ENCODE measurements at regions of chr17 and their contacts with region 1.

Region 1: DNA sequence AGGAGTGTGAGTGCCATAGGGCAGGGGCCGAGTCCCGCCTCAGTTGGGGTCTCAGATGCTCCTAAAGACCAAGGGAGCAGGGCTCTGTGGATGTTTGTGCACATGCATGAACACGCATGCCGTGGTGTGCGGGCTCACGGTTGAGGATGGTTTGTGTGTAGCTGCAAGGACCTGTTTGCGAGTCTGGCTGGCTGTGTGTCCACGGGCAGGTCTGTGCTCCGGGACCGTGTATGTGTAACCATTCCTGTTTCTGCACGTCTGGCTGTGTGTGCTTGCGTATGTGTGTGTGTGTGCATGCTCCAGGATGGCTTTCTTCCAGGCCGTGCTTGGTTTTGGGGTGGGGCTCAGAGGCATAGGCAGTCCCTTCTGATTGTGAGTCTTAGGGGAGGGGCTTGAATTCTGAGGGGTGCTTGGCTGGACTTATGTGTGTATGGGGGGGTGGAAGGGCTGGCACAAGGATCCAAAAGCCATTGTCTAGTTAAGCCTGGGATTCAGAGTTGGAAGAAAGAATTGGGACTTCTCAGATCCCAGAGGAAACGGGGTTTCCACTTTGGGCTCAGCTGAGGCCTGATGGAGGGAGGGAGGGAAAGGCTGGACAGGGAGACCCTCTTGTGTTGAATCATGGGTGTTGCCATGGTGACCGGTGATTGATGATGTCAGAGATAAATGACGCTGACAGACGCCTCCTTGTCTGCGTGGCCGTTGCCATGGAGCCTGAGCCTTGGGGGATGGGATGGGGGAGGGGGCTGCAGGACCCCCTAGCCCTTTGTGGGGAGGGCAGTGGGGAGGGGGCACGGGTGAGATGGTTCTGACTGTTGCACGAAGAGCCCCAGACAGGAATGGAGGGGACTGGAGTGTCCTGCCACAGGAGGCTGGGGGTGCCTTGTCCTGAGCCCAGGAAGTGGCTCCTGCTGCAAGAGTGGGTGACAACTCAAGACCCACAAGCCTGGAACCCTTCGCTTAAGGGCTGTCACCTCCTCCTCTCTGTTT is 14.3 kb downstream of the GJD3 start:
- DNase-seq: peak in 4 of 5 donors; percentile 89 to 93 (median 92)
- H3K4me3 ChIP-seq: peak overlapping the region in 1 of 3 donors; percentile 24
- H3K27ac ChIP-seq: peak overlapping the region in 1 of 2 donors; percentile 1
- H3K4me1 ChIP-seq: peaks cover 4 to 77% (median 59%) of the 10 kb centered on the region in 3 donors
- H3K27me3 ChIP-seq: no peaks in the 10 kb centered on the region
- CTCF ChIP-seq: no peak

Region 2: DNA sequence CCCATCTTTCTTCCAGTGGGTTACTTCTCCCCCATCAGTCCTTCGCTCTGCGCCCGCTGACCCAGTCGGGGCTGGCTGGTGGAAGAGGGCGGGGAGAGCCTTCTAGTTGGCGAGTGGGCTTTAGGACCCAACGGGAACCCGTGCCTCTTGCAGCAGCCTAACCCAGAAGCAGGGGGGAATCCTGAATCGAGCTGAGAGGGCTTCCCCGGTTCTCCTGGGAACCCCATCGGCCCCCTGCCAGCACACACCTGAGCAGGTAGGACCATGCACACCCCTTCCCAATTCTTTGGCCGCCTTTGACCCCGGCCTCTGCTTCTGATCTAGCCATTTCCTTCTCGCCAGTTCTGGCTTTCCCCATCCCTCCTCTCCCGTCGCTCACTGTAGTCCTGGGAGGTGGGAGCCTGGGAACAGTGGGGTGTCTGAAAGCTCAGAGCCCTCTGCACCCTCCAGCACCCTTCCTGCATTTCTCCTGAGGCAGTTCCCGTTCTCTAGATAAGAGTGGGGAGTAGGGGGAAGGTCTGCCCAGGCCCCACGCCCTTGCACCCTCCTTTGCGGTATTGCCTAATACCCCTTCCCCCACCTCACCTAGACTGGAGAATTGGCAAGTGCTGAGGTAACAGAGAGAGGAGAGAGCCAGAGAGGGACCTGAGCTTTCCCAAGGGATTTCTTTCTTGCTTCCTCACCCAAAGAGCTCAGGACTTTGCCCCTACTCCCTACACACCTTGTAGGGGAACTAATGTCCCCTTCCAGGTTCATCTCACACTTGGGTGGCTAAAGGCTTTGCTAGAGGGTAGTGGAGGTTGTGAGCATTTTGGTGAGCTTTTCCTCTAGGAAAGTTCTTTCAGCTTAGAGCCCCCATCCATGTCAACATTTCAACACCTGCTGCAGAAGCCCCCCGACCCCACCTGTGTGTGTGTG is 40.9 kb before region 1 on chr17 and contains the start of gene RARA:
- intact Hi-C with region 1: loop called (anchors 5 kb)
- DNase-seq: peak in 4 of 5 donors; percentile 73 to 85 (median 82)
- H3K4me3 ChIP-seq: peak within 1 kb of the TSS; percentile 41 to 71 (median 64)
- H3K27ac ChIP-seq: peak within 1 kb of the TSS; percentile 52 to 54
- H3K4me1 ChIP-seq: peaks cover 8 to 74% (median 71%) of the 10 kb centered on the region in 3 donors
- H3K27me3 ChIP-seq: no peaks in the 10 kb centered on the region
- CTCF ChIP-seq: no peak
- total RNA-seq, gene RARA: 45.7 TPM

Region 3: DNA sequence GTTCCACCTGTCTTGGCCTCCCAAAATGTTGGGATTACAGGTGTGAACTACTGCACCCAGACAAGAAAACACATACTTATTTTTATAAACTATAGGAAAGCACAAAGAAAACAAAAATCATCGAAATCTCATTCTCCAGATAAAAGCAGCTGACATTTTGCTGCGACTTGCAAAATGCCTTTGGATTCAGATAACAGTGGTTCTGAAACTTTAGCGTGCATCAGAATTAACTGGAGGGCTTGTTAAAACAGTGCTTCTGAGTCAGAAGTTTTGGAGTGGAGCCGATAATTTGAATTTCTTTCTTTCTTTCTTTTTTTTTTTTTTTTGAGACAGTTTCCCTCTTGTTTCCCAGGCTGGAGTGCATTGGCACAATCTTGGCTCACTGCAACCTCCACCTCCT is 32.0 kb after region 1 on chr17:
- intact Hi-C with region 1: no loop called
- DNase-seq: no peak
- H3K4me3 ChIP-seq: no peak overlapping the region
- H3K27ac ChIP-seq: no peak overlapping the region
- H3K4me1 ChIP-seq: no peaks in the 10 kb centered on the region
- H3K27me3 ChIP-seq: no peaks in the 10 kb centered on the region
- CTCF ChIP-seq: no peak

Measured in kidney (tissue), 22 donors.